Activated CD8-positive, alpha-beta T cell treated with anti-CD3 and anti-CD28 coated beads, Interleukin-2, amount 10 ng/mL, durations not matched to agents 7 days and 5 days (primary cell): ENCODE measurements at regions of chr1 and their contacts with region 1.

Region 1: GRCh38 chr1:169601093-169601881 is 15.0 kb upstream of the F5 start:
- DNase-seq: no peak
- ATAC-seq: no peak
- H3K4me3 Mint-ChIP-seq: no peak overlapping the region
- H3K27ac Mint-ChIP-seq: peak overlapping the region; percentile 14
- H3K4me1 Mint-ChIP-seq: peaks cover 51% of the 10 kb centered on the region
- H3K27me3 Mint-ChIP-seq: no peaks in the 10 kb centered on the region

Region 2: GRCh38 chr1:169576241-169576934 is 24.9 kb before region 1 on chr1:
- CTCF ChIA-PET with region 1: interaction called, 11 read pairs
- POLR2A ChIA-PET with region 1: no interaction called
- DNase-seq: no peak
- ATAC-seq: no peak
- H3K4me3 Mint-ChIP-seq: no peak overlapping the region
- H3K27ac Mint-ChIP-seq: no peak overlapping the region
- H3K4me1 Mint-ChIP-seq: peaks cover 4% of the 10 kb centered on the region
- H3K27me3 Mint-ChIP-seq: no peaks in the 10 kb centered on the region

Region 3: DNA sequence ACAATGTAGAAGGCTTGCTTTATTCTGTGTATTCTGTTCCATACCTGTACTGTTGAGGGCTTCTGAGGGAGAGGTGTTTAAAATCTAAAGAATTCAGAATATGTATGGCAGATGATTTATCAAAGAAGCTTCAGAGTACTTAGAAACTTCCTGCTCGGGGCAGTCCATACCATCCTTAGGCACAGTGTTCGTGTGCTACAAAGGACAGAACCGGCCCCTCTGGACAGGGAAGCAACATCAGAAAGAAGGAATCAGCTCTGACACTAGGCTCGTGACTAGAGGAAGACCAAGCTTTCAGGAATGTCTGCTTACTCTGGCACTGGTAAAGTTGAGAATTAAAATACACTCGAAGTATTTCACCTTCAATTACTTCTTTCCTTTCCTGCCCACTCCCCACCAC is 14.5 kb after region 1 on chr1:
- CTCF ChIA-PET with region 1: interaction called, 27 read pairs
- POLR2A ChIA-PET with region 1: no interaction called
- DNase-seq: no peak
- ATAC-seq: no peak
- H3K4me3 Mint-ChIP-seq: no peak overlapping the region
- H3K27ac Mint-ChIP-seq: no peak overlapping the region
- H3K4me1 Mint-ChIP-seq: peaks cover 6% of the 10 kb centered on the region
- H3K27me3 Mint-ChIP-seq: no peaks in the 10 kb centered on the region

Region 4: GRCh38 chr1:169630006-169630405 is 28.7 kb after region 1 on chr1 and contains the start of gene SELP:
- CTCF ChIA-PET with region 1: interaction called, 10 read pairs
- POLR2A ChIA-PET with region 1: interaction called, 3 read pairs
- DNase-seq: no peak
- ATAC-seq: no peak
- H3K4me3 Mint-ChIP-seq: no peak within 1 kb of the TSS
- H3K27ac Mint-ChIP-seq: peak within 1 kb of the TSS; percentile 32
- H3K4me1 Mint-ChIP-seq: peaks cover 36% of the 10 kb centered on the region
- H3K27me3 Mint-ChIP-seq: no peaks in the 10 kb centered on the region
- total RNA-seq, gene SELP: 0.13 TPM in 1 of 2 experiments, not detected in the other

Region 5: GRCh38 chr1:169680377-169681019 is 79.2 kb after region 1 on chr1:
- CTCF ChIA-PET with region 1: interaction called, 34 read pairs
- POLR2A ChIA-PET with region 1: no interaction called
- DNase-seq: no peak
- ATAC-seq: peak; percentile 45
- H3K4me3 Mint-ChIP-seq: no peak overlapping the region
- H3K27ac Mint-ChIP-seq: peak overlapping the region; percentile 41
- H3K4me1 Mint-ChIP-seq: peaks cover 56% of the 10 kb centered on the region
- H3K27me3 Mint-ChIP-seq: no peaks in the 10 kb centered on the region

Region 6: DNA sequence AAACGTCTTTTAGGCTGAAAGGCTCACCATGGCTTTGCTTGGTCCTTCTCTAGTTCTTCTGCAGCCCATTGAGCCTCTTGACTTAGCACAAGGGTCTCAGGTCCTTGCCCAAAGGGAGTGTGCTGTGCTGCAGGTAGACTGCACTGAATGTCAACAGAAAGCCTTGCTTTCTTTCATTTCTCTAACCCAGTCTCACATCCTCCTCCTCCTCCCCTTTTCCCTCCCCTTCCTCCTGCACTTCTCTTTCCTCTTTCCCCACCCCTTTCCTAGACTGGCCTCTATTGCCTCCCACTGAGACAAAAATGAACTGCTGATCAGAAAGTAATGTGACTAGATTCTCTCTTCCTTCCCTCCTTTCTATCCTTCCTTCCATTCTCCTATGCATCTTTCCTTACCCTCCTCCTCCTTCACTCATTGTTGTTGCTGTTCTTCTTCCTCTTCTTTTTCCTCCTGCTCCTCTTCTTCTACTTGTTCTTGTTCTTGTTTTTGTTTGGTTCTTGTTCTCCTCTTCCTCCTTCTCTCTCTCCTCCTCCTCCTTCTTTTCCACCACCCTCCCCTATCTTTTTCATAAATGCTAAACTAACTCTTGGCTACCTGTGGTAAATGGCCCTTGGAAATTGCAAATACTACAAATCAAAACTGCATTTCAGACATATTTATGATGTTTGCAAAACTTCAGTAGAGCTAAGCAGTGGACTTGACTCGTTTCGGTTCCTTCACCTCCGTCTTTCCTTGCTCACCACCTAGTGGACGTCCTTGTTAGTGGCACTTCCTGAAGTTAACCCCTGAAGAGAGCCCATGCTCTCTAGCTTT is 110.4 kb after region 1 on chr1 and contains the start of gene SELL:
- CTCF ChIA-PET with region 1: interaction called, 215 read pairs
- POLR2A ChIA-PET with region 1: interaction called, 8 read pairs
- DNase-seq: peak; percentile 89
- ATAC-seq: peak; percentile 80
- H3K4me3 Mint-ChIP-seq: peak within 1 kb of the TSS; percentile 81
- H3K27ac Mint-ChIP-seq: peak within 1 kb of the TSS; percentile 90
- H3K4me1 Mint-ChIP-seq: peaks cover 29% of the 10 kb centered on the region
- H3K27me3 Mint-ChIP-seq: peaks cover 10% of the 10 kb centered on the region
- total RNA-seq, gene SELL: 192 to 222 TPM

Region 7: DNA sequence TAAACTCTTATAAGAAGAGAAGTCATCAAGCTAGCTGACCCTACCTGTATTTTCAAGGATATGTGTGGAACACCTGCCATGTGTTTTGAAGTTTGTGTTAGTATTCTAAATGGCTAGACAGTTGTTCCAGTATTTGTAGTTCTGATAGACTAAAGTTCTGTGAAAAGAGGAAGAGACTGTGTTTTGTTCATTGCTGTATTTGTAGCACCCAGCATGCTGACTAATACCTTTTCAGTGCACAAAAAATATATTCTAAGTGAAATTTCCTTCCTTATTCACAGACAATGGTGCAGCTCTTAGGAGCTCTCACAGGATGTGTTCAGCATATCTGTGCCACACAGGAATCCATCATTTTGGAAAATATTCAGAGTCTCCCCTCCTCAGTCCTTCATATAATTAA is 201.6 kb after region 1 on chr1:
- CTCF ChIA-PET with region 1: interaction called, 11 read pairs
- POLR2A ChIA-PET with region 1: no interaction called
- DNase-seq: no peak
- ATAC-seq: no peak
- H3K4me3 Mint-ChIP-seq: no peak overlapping the region
- H3K27ac Mint-ChIP-seq: no peak overlapping the region
- H3K4me1 Mint-ChIP-seq: peaks cover 14% of the 10 kb centered on the region
- H3K27me3 Mint-ChIP-seq: no peaks in the 10 kb centered on the region